ENCODE measurements at regions of chr12 and their contacts with region 1.

Region 1: GRCh38 chr12:31362759-31363415 is 36.9 kb upstream of the SINHCAF start:
- DNase-seq: peak; percentile 63
- H3K4me3 Mint-ChIP-seq: peak overlapping the region; percentile 42
- H3K27ac Mint-ChIP-seq: peak overlapping the region; percentile 93
- H3K4me1 Mint-ChIP-seq: peaks cover 25% of the 10 kb centered on the region
- H3K27me3 Mint-ChIP-seq: peaks cover 2% of the 10 kb centered on the region

Region 2: GRCh38 chr12:31387466-31387865 is 24.6 kb after region 1 on chr12:
- CTCF ChIA-PET with region 1: no interaction called
- POLR2A ChIA-PET with region 1: interaction called, 10 read pairs
- DNase-seq: no peak
- H3K4me3 Mint-ChIP-seq: no peak overlapping the region
- H3K27ac Mint-ChIP-seq: no peak overlapping the region
- H3K4me1 Mint-ChIP-seq: no peaks in the 10 kb centered on the region
- H3K27me3 Mint-ChIP-seq: peaks cover 6% of the 10 kb centered on the region